Activated CD8-positive, alpha-beta T cell treated with anti-CD3 and anti-CD28 coated beads for 36 hours (primary cell): ENCODE measurements at regions of chr12 and their contacts with region 1.

Region 1: DNA sequence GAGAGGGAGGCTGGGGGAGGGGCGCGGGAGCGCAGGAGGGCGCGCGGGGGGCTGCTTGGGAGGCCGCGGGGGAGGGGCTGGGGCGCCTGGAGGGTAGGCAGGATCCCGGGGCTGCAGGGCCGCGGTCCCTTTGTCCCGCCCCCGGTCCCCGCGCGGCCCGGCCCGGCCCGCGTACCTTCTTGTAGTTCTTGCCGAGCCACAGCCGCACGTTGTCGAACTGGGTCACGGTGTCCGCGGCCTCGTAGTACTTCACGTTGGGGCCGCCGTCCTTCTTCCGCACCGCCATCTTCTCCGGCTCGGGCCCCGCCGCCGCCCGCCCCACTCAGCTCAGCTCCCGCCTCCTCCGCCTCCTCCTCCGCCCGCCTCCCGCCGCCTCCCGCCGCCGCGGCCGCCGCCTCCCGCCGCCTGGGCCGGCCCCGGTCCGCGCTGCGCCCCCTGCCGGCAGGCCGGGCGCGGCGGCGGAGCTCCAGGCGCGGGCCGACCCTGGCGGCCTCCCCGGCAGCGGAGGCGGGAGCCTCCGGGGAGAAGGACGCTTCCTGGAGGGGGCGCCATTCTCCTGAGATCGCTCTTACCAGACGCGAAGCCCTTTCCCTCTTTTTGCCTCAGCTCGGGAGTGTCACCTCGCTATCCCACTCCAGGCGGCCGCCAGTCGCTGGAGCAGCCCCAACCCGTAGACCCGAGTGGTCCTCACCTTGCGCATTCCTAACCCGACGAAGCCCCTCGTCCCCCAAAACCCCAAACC is at the start of gene SMARCC2:
- DNase-seq: peak; percentile 91
- ATAC-seq: peak; percentile 84
- H3K4me3 Mint-ChIP-seq: peak within 1 kb of the TSS; percentile 92
- H3K27ac Mint-ChIP-seq: peak within 1 kb of the TSS; percentile 98
- H3K4me1 Mint-ChIP-seq: peaks cover 40% of the 10 kb centered on the region
- H3K27me3 Mint-ChIP-seq: peaks cover 2% of the 10 kb centered on the region
- CTCF ChIP-seq: peak; percentile 76
- total RNA-seq, gene SMARCC2: 79.3 to 87.9 TPM

Region 2: DNA sequence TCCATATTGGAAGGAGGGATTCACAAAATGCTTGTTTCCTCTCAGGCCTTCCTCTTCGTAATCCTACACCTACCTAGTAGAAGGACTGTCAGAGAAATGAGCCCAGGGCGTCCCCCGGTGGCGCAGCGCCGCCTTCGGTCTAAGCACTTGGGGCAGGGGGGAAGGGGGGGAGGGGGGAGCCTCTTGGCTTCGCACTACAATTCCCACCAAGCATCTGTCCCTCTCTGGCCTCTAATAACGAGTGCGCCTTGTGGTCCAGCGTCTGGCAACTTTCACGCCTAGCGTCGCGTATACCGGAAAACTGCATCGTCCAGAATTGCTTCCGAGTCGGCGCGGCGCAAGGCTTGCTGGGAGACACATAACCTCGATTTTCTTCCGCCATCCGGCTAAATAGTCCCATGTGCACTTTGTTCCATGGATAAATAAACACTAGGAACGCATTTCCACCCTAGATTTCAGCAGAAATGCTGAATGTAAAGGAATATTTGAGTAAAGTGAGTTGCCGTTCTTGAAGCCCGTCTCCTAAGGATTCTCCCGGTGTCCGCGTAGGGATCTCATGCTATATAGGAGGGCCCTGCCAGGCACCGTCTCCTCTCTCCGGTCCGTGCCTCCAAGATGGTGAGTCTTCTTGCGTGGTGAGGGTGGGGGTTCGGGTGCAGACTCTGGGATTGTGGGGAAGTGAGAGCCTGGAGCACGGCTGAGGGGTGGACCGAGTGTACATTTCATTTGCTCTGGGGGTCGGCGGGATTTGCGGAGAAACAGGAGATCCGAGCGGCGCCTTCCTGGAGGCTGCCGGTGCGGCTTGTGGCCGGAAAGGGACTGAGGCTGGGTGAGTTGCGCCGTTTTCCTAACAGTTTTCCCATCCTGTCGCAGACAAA is 147.6 kb before region 1 on chr12 and contains the start of gene RPS26:
- CTCF ChIA-PET with region 1: interaction called, 12 read pairs
- POLR2A ChIA-PET with region 1: interaction called, 7 read pairs
- intact Hi-C with region 1: no loop called
- DNase-seq: peak; percentile 97
- ATAC-seq: peak; percentile 90
- H3K4me3 Mint-ChIP-seq: peak within 1 kb of the TSS; percentile 84
- H3K27ac Mint-ChIP-seq: peak within 1 kb of the TSS; percentile 92
- H3K4me1 Mint-ChIP-seq: peaks cover 52% of the 10 kb centered on the region
- H3K27me3 Mint-ChIP-seq: no peaks in the 10 kb centered on the region
- CTCF ChIP-seq: peak; percentile 57
- total RNA-seq, gene RPS26: 29.7 to 29.8 TPM

Region 3: GRCh38 chr12:56053407-56053893 is 135.9 kb before region 1 on chr12:
- CTCF ChIA-PET with region 1: no interaction called
- POLR2A ChIA-PET with region 1: no interaction called
- intact Hi-C with region 1: no loop called
- DNase-seq: no peak
- ATAC-seq: no peak
- H3K4me3 Mint-ChIP-seq: no peak overlapping the region
- H3K27ac Mint-ChIP-seq: no peak overlapping the region
- H3K4me1 Mint-ChIP-seq: peaks cover 4% of the 10 kb centered on the region
- H3K27me3 Mint-ChIP-seq: no peaks in the 10 kb centered on the region
- CTCF ChIP-seq: no peak

Region 4: DNA sequence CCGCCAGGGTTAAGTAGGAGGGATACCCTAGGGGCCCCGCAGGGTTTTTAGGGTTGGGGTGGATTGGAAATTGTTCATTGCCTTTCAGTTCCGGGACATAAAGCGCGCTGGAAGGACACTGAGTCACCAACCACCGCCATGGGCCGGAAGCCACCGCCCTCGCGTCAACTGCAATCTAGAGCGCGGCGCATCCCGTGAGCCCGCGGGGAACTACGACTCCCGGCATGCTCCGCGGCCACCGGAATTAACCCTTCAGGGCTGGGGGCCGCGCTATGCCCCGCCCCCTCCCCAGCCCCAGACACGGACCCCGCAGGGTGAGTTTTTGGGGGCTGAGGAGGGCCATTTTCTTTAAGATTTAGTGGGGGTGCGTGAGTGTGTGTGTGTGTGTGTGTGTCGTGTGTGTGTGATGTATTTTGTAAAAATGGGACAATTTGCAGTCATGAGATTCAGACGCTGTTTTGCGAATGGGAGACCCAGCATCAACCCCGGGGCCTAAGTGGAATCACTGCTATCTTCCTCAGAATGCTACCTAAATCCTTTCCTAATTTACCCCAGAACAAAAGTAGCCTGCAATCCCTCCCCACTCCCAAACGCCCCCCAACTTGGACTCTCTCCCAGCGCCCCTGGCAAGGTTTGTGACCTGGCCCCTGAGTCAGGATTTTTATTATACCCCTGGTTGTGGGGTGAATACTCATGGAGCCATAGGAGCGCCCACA is 36.9 kb before region 1 on chr12 and contains the start of gene MYL6B:
- CTCF ChIA-PET with region 1: interaction called, 14 read pairs
- POLR2A ChIA-PET with region 1: interaction called, 8 read pairs
- intact Hi-C with region 1: no loop called
- DNase-seq: peak; percentile 98
- ATAC-seq: peak; percentile 88
- H3K4me3 Mint-ChIP-seq: peak within 1 kb of the TSS; percentile 92
- H3K27ac Mint-ChIP-seq: peak within 1 kb of the TSS; percentile 100
- H3K4me1 Mint-ChIP-seq: peaks cover 36% of the 10 kb centered on the region
- H3K27me3 Mint-ChIP-seq: no peaks in the 10 kb centered on the region
- CTCF ChIP-seq: no peak
- total RNA-seq, gene MYL6B: 60.3 to 66.9 TPM

Region 5: GRCh38 chr12:56172831-56173230 is 16.5 kb before region 1 on chr12:
- CTCF ChIA-PET with region 1: interaction called, 22 read pairs
- POLR2A ChIA-PET with region 1: interaction called, 8 read pairs
- intact Hi-C with region 1: no loop called
- DNase-seq: no peak
- ATAC-seq: no peak
- H3K4me3 Mint-ChIP-seq: no peak overlapping the region
- H3K27ac Mint-ChIP-seq: peak overlapping the region; percentile 30
- H3K4me1 Mint-ChIP-seq: no peaks in the 10 kb centered on the region
- H3K27me3 Mint-ChIP-seq: no peaks in the 10 kb centered on the region
- CTCF ChIP-seq: no peak

Region 6: DNA sequence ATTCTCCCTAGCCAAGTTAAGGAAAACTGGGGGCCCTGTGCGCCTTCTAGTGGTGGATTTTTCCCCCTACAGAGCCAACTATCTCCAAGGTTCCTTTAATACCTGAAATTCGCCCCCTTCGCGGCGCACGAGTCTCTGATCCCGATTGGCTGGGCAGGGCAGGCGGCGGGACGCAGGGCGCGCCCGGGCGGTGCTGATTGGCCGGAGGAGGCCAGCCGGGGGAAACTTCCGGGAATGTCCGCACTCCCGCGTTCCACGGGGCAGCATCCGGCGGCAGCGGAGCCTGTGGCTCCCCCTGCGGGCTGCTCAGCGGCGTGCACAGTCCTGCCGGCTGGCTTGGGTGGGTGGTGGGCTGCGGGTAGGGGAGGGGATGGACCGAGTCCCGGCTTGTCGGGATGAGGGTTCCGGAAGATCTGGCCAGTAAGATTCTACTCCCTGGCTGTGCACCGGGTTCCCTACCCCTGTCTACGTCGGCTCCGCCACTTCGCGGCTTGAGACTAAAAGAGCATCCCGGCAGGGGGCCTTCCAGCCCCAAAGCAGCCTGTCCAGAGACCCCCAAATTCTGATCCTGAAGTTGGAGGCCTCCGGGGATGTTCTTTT is 34.9 kb after region 1 on chr12 and contains the start of gene NABP2:
- CTCF ChIA-PET with region 1: interaction called, 41 read pairs
- POLR2A ChIA-PET with region 1: interaction called, 17 read pairs
- intact Hi-C with region 1: loop called (anchors 2 kb)
- DNase-seq: peak; percentile 97
- ATAC-seq: peak; percentile 81
- H3K4me3 Mint-ChIP-seq: peak within 1 kb of the TSS; percentile 98
- H3K27ac Mint-ChIP-seq: peak within 1 kb of the TSS; percentile 87
- H3K4me1 Mint-ChIP-seq: peaks cover 27% of the 10 kb centered on the region
- H3K27me3 Mint-ChIP-seq: no peaks in the 10 kb centered on the region
- CTCF ChIP-seq: peak; percentile 89
- total RNA-seq, gene NABP2: 58.7 to 60.2 TPM

Region 7: GRCh38 chr12:56299853-56300643 is 110.7 kb after region 1 on chr12 and contains the start of gene CS:
- CTCF ChIA-PET with region 1: interaction called, 10 read pairs
- POLR2A ChIA-PET with region 1: interaction called, 4 read pairs
- intact Hi-C with region 1: no loop called
- DNase-seq: peak; percentile 99
- ATAC-seq: peak; percentile 99
- H3K4me3 Mint-ChIP-seq: peak within 1 kb of the TSS; percentile 93
- H3K27ac Mint-ChIP-seq: peak within 1 kb of the TSS; percentile 94
- H3K4me1 Mint-ChIP-seq: peaks cover 43% of the 10 kb centered on the region
- H3K27me3 Mint-ChIP-seq: no peaks in the 10 kb centered on the region
- CTCF ChIP-seq: no peak
- total RNA-seq, gene CS: 292 to 297 TPM

Region 8: GRCh38 chr12:56413392-56413791 is 224.0 kb after region 1 on chr12:
- CTCF ChIA-PET with region 1: no interaction called
- POLR2A ChIA-PET with region 1: no interaction called
- intact Hi-C with region 1: no loop called
- DNase-seq: no peak
- ATAC-seq: no peak
- H3K4me3 Mint-ChIP-seq: no peak overlapping the region
- H3K27ac Mint-ChIP-seq: no peak overlapping the region
- H3K4me1 Mint-ChIP-seq: no peaks in the 10 kb centered on the region
- H3K27me3 Mint-ChIP-seq: no peaks in the 10 kb centered on the region
- CTCF ChIP-seq: no peak